Right cardiac atrium (tissue), 5 donors: ENCODE measurements at regions of chr3 and their contacts with region 1.

Region 1: GRCh38 chr3:32510075-32510724 is 7.5 kb upstream of the CMTM6 start:
- DNase-seq: peak; percentile 54 to 72 (median 69)
- ATAC-seq: peak; percentile 93 to 95
- H3K4me3 ChIP-seq: no peak overlapping the region
- H3K27ac ChIP-seq: no peak overlapping the region
- H3K4me1 ChIP-seq: no peaks in the 10 kb centered on the region
- H3K27me3 ChIP-seq: no peaks in the 10 kb centered on the region

Region 2: DNA sequence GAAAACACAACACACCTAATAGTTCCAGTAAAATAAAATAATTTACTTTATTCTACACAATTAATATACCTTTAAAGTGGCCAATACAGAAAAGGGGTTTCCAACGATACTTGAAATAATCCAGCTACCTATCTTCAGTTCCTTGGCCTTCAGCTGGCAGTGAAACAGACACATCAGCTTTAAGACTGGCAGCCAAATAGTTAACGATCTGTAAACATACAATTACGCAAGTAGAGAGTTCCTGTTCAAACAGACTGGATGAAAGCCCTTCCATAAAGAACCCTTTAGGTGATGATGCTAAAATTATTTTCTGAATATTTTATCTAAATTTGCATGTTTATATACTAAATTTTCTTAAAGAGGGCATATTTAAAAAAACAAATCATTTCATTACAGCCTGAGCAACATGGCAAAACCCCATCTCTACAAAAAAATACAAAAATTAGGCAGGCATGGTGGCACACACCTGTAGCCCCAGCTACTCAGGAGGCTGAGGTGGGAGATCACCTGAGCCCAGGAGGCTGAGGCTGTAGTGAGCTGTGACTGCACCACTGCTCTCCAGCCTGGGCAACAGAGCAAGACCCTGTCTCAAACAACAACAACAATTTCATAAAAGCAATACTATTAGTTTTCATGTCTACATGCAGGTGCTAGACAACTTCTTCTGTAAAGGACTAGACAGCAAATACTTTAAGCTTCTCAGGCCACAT is 47.6 kb after region 1 on chr3:
- intact Hi-C with region 1: no loop called
- DNase-seq: no peak
- ATAC-seq: no peak
- H3K4me3 ChIP-seq: no peak overlapping the region
- H3K27ac ChIP-seq: no peak overlapping the region
- H3K4me1 ChIP-seq: no peaks in the 10 kb centered on the region
- H3K27me3 ChIP-seq: no peaks in the 10 kb centered on the region

Region 3: GRCh38 chr3:32667122-32667521 is 156.9 kb after region 1 on chr3:
- intact Hi-C with region 1: loop called (anchors 2 to 5 kb)
- DNase-seq: no peak
- ATAC-seq: no peak
- H3K4me3 ChIP-seq: no peak overlapping the region
- H3K27ac ChIP-seq: no peak overlapping the region
- H3K4me1 ChIP-seq: no peaks in the 10 kb centered on the region
- H3K27me3 ChIP-seq: no peaks in the 10 kb centered on the region